ENCODE measurements at regions of chr13 and their contacts with region 1.

Region 1: GRCh38 chr13:85806553-85807175 is 7.4 kb upstream of the SLITRK6 start:
- DNase-seq: peak in 1 of 2 experiments; percentile 37
- H3K4me3 ChIP-seq: no peak overlapping the region
- H3K27ac ChIP-seq: no peak overlapping the region
- H3K4me1 ChIP-seq: no peaks in the 10 kb centered on the region
- H3K27me3 ChIP-seq: no peaks in the 10 kb centered on the region
- CTCF ChIP-seq: peak; percentile 86

Region 2: DNA sequence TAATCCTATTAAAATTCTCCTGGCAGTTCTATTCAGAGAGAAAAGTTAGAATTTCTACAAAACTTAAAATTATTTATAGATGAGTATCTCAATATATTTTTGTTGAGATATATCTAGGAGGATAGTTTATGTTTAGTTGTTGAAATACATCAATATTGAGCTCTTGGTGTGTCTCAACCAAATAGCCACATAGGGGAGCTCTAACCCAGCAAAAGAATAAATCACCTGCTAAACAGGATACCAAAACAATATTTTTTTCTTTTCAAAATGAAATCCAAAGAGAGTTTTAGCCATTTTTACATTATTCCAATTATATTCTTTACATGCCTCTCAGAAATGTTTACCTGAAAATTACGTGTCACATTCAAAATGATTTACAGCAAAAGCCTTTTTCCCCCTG is 962.2 kb before region 1 on chr13:
- CTCF ChIA-PET with region 1: no interaction called
- POLR2A ChIA-PET with region 1: no interaction called
- intact Hi-C with region 1: loop called (anchors 5 kb)
- DNase-seq: no peak
- H3K4me3 ChIP-seq: no peak overlapping the region
- H3K27ac ChIP-seq: no peak overlapping the region
- H3K4me1 ChIP-seq: no peaks in the 10 kb centered on the region
- H3K27me3 ChIP-seq: no peaks in the 10 kb centered on the region
- CTCF ChIP-seq: peak; percentile 68

Region 3: GRCh38 chr13:84896128-84896527 is 910.5 kb before region 1 on chr13:
- CTCF ChIA-PET with region 1: no interaction called
- POLR2A ChIA-PET with region 1: no interaction called
- intact Hi-C with region 1: loop called (anchors 1 kb)
- DNase-seq: peak; percentile 39 to 44
- H3K4me3 ChIP-seq: no peak overlapping the region
- H3K27ac ChIP-seq: no peak overlapping the region
- H3K4me1 ChIP-seq: no peaks in the 10 kb centered on the region
- H3K27me3 ChIP-seq: no peaks in the 10 kb centered on the region
- CTCF ChIP-seq: peak; percentile 80

Region 4: GRCh38 chr13:84917252-84917878 is 889.3 kb before region 1 on chr13:
- CTCF ChIA-PET with region 1: no interaction called
- POLR2A ChIA-PET with region 1: no interaction called
- intact Hi-C with region 1: loop called (anchors 1 kb)
- DNase-seq: peak in 1 of 2 experiments; percentile 38
- H3K4me3 ChIP-seq: no peak overlapping the region
- H3K27ac ChIP-seq: no peak overlapping the region
- H3K4me1 ChIP-seq: no peaks in the 10 kb centered on the region
- H3K27me3 ChIP-seq: no peaks in the 10 kb centered on the region
- CTCF ChIP-seq: peak; percentile 65

Region 5: GRCh38 chr13:85785205-85785604 is 21.5 kb before region 1 on chr13:
- CTCF ChIA-PET with region 1: no interaction called
- POLR2A ChIA-PET with region 1: no interaction called
- intact Hi-C with region 1: no loop called
- DNase-seq: no peak
- H3K4me3 ChIP-seq: no peak overlapping the region
- H3K27ac ChIP-seq: no peak overlapping the region
- H3K4me1 ChIP-seq: no peaks in the 10 kb centered on the region
- H3K27me3 ChIP-seq: no peaks in the 10 kb centered on the region
- CTCF ChIP-seq: no peak